Heart left ventricle (tissue), 16 donors: ENCODE measurements at regions of chr10 and their contacts with region 1.

Region 1: GRCh38 chr10:27446091-27446918 is 57.8 kb upstream of the RAB18 start:
- DNase-seq: no peak
- ATAC-seq: peak in 1 of 4 donors; percentile 33
- H3K4me3 ChIP-seq: no peak overlapping the region
- H3K27ac ChIP-seq: no peak overlapping the region
- H3K4me1 ChIP-seq: peaks cover 0 to 23% (median 0%) of the 10 kb centered on the region in 12 donors
- H3K27me3 ChIP-seq: no peaks in the 10 kb centered on the region
- CTCF ChIP-seq: peak; percentile 23 to 57 (median 43)
- POLR2A ChIP-seq: no peak

Region 2: DNA sequence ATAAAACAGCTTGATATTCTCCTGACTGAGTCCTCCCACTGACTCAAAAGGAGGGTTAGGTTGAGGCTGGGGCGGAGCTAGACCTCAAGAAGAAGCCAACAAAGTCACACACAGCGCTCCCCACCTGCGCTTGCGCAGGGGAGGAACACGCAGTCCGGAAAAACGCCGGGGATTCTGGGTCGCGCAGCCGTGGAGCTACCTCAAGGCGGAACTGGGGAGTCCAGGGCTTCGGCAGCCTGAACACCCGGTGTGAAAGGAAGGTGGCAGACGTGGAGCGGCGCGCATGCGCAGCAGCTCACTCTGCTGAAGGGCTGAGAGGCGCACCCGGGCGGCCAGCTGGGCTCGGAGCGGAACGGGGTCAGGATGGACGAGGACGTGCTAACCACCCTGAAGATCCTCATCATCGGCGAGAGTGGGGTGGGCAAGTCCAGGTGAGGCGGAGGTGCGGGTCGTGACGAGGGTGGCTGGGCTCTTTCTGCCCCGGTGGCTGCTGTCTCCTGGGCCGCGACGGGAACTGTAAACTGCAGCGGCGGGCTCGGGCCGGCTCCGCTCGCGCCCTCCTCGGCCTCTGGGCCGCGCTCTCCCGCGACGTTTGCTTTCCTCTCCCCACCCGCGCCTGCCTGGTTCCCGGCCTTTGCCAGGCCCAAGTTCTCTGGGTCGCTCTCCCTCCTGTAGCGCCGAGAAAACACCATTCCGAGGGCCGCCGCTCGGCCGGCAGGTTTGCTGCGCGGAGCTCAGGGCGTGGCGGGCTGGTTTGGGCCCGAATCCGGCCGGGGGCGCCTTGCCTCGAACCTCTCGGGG is 57.9 kb after region 1 on chr10 and contains the start of gene RAB18:
- intact Hi-C with region 1: no loop called
- DNase-seq: peak; percentile 97 to 99 (median 99)
- ATAC-seq: peak; percentile 99 to 100 (median 100)
- H3K4me3 ChIP-seq: peak within 1 kb of the TSS; percentile 49 to 98 (median 89)
- H3K27ac ChIP-seq: peak within 1 kb of the TSS; percentile 73 to 92 (median 86)
- H3K4me1 ChIP-seq: peaks cover 0 to 46% (median 31%) of the 10 kb centered on the region in 12 donors
- H3K27me3 ChIP-seq: no peaks in the 10 kb centered on the region
- CTCF ChIP-seq: peak in 4 of 12 donors; percentile 13 to 34 (median 22)
- POLR2A ChIP-seq: peak in 1 of 2 donors; percentile 84
- total RNA-seq, gene RAB18: 39.8 to 145 (median 128) TPM

Region 3: GRCh38 chr10:27654284-27654683 is 208.0 kb after region 1 on chr10:
- intact Hi-C with region 1: loop called (anchors 5 to 10 kb)
- DNase-seq: no peak
- ATAC-seq: no peak
- H3K4me3 ChIP-seq: no peak overlapping the region
- H3K27ac ChIP-seq: no peak overlapping the region
- H3K4me1 ChIP-seq: no peaks in the 10 kb centered on the region
- H3K27me3 ChIP-seq: no peaks in the 10 kb centered on the region
- CTCF ChIP-seq: no peak
- POLR2A ChIP-seq: no peak

Region 4: GRCh38 chr10:27661514-27662286 is 215.4 kb after region 1 on chr10:
- intact Hi-C with region 1: loop called in 8 of 10 experiments (anchors 5 to 10 kb)
- DNase-seq: no peak
- ATAC-seq: no peak
- H3K4me3 ChIP-seq: no peak overlapping the region
- H3K27ac ChIP-seq: no peak overlapping the region
- H3K4me1 ChIP-seq: peaks cover 0 to 25% (median 0%) of the 10 kb centered on the region in 12 donors
- H3K27me3 ChIP-seq: no peaks in the 10 kb centered on the region
- CTCF ChIP-seq: no peak
- POLR2A ChIP-seq: no peak

Region 5: GRCh38 chr10:27724287-27724686 is 278.0 kb after region 1 on chr10:
- intact Hi-C with region 1: loop called in 1 of 10 experiments (anchors 10 kb)
- DNase-seq: no peak
- ATAC-seq: no peak
- H3K4me3 ChIP-seq: no peak overlapping the region
- H3K27ac ChIP-seq: peak overlapping the region in 1 of 12 donors; percentile 6
- H3K4me1 ChIP-seq: no peaks in the 10 kb centered on the region
- H3K27me3 ChIP-seq: peaks cover 0 to 5% (median 0%) of the 10 kb centered on the region in 9 donors
- CTCF ChIP-seq: peak in 2 of 12 donors; percentile 11 to 15
- POLR2A ChIP-seq: no peak

Region 6: DNA sequence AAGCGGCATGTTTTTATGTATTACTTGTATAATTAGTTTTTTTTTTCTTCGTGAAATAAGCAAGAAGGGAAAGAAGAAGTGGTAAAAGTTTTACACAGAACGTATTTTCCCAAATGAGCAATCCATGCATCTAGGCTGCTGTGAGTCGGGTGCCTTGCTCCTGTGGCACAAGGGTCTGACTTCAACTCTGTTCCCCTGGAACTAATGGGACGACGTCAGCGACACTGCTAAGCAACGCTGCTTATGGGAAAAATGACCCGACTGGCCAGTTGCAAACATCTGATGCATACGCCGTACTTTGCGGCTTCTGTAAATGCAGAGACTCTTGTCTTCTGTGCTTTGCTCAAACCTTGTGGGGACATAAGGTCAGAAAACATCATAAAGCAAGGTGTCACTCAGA is 790.3 kb after region 1 on chr10:
- intact Hi-C with region 1: loop called in 9 of 10 experiments (anchors 5 to 10 kb)
- DNase-seq: no peak
- ATAC-seq: no peak
- H3K4me3 ChIP-seq: no peak overlapping the region
- H3K27ac ChIP-seq: no peak overlapping the region
- H3K4me1 ChIP-seq: no peaks in the 10 kb centered on the region
- H3K27me3 ChIP-seq: no peaks in the 10 kb centered on the region
- CTCF ChIP-seq: no peak
- POLR2A ChIP-seq: no peak